Breast epithelium (tissue), 4 donors: ENCODE measurements at regions of chr1 and their contacts with region 1.

Region 1: GRCh38 chr1:115453666-115454065 is 115.6 kb upstream of the NGF start:
- DNase-seq: no peak
- H3K4me3 ChIP-seq: no peak overlapping the region
- H3K27ac ChIP-seq: no peak overlapping the region
- H3K4me1 ChIP-seq: no peaks in the 10 kb centered on the region
- H3K27me3 ChIP-seq: no peaks in the 10 kb centered on the region
- CTCF ChIP-seq: no peak
- POLR2A ChIP-seq: no peak

Region 2: GRCh38 chr1:115491298-115492018 is 37.8 kb after region 1 on chr1:
- intact Hi-C with region 1: loop called (anchors 2 kb)
- DNase-seq: no peak
- H3K4me3 ChIP-seq: no peak overlapping the region
- H3K27ac ChIP-seq: no peak overlapping the region
- H3K4me1 ChIP-seq: no peaks in the 10 kb centered on the region
- H3K27me3 ChIP-seq: no peaks in the 10 kb centered on the region
- CTCF ChIP-seq: no peak
- POLR2A ChIP-seq: no peak

Region 3: DNA sequence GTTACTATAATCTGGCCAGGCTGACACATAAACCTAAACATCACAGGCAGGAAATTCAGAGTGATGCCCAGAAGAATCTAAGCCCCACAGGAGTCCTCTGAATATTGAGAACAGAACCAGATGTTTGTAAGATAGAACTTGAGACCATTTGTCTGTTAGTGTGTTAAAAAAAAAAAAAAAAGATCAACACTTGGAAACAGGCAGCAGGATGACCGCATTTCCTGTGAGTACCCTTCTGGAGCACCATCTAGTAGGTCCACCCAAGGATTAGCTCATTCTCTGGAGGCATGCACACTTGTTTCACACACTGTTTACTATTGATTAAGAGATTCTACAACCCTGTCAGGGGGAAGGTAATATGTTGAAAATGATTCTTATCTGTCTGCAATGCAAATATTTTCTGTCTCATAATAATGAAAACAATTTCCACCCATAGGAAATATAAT is 76.8 kb after region 1 on chr1:
- intact Hi-C with region 1: no loop called
- DNase-seq: no peak
- H3K4me3 ChIP-seq: no peak overlapping the region
- H3K27ac ChIP-seq: no peak overlapping the region
- H3K4me1 ChIP-seq: no peaks in the 10 kb centered on the region
- H3K27me3 ChIP-seq: no peaks in the 10 kb centered on the region
- CTCF ChIP-seq: no peak
- POLR2A ChIP-seq: no peak